Activated T-helper 1 cell treated with anti-CD3 and anti-CD28 coated beads, Interleukin-12 subunit alpha, Interleukin-12 subunit beta, Interleukin-2, Interleukin-4 antibody, amounts not matched to agents 30 ng/mL and 10 ng/mL and 1 ng/mL, durations not matched to agents 14 hours and 24 hours and 36 hours (primary cell): ENCODE measurements at regions of chr12 and their contacts with region 1.

Region 1: DNA sequence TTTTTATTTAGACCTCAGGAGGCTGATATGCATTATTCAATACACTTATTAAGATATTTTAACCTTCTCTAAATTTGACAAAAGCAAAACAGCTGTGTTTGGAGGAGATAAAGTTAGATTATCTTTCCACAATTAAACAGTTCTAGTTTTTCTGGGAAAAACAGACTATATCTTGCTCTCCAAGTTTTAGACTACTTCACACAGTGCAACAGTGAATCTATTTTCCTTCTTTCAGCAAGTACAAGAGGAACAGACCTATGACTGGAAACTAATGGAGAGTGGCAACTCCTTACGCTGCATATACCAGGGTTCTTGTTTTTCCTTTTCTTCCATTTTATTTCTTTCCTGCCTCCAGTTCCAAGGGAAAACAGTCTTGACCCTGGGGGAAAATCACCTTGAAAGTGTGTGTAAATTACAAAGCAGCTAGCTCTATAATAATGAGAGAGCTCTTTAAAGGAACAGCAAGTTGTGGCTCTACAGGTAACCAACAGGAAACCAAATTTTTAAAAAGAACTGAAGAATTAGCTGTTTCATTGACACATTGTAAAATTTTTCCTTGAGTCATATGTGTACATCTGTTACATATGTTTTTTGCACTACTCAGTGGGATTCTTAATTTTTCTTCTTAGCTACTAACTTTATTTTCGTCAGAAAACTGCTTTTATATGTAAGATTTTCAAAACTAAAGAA is 27.4 kb downstream of the DNM1L start:
- DNase-seq: no peak
- H3K4me3 Mint-ChIP-seq: peak overlapping the region; percentile 45
- H3K27ac Mint-ChIP-seq: peak overlapping the region; percentile 64
- H3K4me1 Mint-ChIP-seq: peaks cover 26% of the 10 kb centered on the region
- H3K27me3 Mint-ChIP-seq: no peaks in the 10 kb centered on the region

Region 2: DNA sequence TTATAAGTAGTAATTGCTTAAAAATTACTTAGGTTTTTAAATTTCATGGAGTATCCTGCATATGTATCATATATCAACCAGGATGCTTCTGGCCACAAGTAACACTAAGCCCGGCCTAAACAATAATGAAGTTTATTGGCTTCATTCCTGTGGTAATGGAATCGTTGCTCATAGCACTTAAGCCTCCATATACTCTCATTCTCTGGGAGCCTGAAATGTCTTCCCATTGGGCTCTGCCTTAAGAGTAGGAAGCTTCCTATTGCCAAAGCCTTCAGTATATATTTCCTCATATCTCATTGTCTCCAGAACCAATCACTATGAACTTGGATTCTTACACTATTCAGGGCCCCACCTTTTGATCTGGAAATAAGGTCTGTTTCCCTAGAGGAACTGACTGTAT is 111.2 kb before region 1 on chr12:
- intact Hi-C with region 1: no loop called
- DNase-seq: no peak
- H3K4me3 Mint-ChIP-seq: no peak overlapping the region
- H3K27ac Mint-ChIP-seq: no peak overlapping the region
- H3K4me1 Mint-ChIP-seq: peaks cover 4% of the 10 kb centered on the region
- H3K27me3 Mint-ChIP-seq: no peaks in the 10 kb centered on the region

Region 3: GRCh38 chr12:32692358-32692757 is 14.1 kb before region 1 on chr12:
- intact Hi-C with region 1: loop called (anchors 2 kb)
- DNase-seq: no peak
- H3K4me3 Mint-ChIP-seq: no peak overlapping the region
- H3K27ac Mint-ChIP-seq: no peak overlapping the region
- H3K4me1 Mint-ChIP-seq: peaks cover 37% of the 10 kb centered on the region
- H3K27me3 Mint-ChIP-seq: no peaks in the 10 kb centered on the region

Region 4: DNA sequence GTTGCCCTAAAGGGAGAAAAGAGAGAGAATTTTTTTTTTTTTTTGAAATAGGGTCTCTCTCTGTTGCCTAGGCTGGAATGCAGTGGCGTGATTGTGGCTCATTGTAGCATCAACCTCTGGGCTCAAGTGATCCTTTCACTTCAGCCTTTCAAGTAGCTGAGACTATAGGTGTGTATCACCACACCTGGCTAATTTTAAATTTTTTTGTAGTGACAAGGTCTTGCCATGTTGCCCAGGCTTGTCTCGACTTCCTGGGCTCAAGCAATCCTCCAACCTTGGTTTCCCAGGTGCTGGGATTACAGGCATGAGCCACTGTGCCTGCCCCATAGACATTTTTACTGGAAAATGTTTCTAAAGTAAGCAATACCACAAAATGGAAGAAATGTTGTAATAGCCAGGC is 12.4 kb after region 1 on chr12:
- intact Hi-C with region 1: loop called (anchors 2 kb)
- DNase-seq: no peak
- H3K4me3 Mint-ChIP-seq: no peak overlapping the region
- H3K27ac Mint-ChIP-seq: no peak overlapping the region
- H3K4me1 Mint-ChIP-seq: no peaks in the 10 kb centered on the region
- H3K27me3 Mint-ChIP-seq: no peaks in the 10 kb centered on the region

Region 5: DNA sequence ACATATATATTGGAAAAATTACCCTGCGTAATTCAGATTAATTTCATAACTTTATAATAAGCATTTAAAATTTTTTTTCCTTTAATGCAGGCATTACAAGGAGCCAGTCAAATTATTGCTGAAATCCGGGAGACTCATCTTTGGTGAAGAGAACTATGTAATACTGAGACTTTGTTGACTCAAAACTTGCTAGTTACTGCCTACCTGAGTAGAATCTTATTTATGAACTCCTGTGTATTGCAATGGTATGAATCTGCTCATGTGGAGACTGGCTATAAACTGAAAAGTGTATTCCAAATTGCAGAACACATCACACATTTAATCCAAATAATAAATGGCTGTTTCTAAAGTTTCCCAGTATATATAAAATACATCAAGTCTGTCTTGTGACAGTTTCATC is 36.8 kb after region 1 on chr12:
- intact Hi-C with region 1: loop called (anchors 5 kb)
- DNase-seq: no peak
- H3K4me3 Mint-ChIP-seq: no peak overlapping the region
- H3K27ac Mint-ChIP-seq: no peak overlapping the region
- H3K4me1 Mint-ChIP-seq: peaks cover 7% of the 10 kb centered on the region
- H3K27me3 Mint-ChIP-seq: no peaks in the 10 kb centered on the region